Panc1 (cell line): ENCODE measurements at regions of chr2 and their contacts with region 1.

Region 1: DNA sequence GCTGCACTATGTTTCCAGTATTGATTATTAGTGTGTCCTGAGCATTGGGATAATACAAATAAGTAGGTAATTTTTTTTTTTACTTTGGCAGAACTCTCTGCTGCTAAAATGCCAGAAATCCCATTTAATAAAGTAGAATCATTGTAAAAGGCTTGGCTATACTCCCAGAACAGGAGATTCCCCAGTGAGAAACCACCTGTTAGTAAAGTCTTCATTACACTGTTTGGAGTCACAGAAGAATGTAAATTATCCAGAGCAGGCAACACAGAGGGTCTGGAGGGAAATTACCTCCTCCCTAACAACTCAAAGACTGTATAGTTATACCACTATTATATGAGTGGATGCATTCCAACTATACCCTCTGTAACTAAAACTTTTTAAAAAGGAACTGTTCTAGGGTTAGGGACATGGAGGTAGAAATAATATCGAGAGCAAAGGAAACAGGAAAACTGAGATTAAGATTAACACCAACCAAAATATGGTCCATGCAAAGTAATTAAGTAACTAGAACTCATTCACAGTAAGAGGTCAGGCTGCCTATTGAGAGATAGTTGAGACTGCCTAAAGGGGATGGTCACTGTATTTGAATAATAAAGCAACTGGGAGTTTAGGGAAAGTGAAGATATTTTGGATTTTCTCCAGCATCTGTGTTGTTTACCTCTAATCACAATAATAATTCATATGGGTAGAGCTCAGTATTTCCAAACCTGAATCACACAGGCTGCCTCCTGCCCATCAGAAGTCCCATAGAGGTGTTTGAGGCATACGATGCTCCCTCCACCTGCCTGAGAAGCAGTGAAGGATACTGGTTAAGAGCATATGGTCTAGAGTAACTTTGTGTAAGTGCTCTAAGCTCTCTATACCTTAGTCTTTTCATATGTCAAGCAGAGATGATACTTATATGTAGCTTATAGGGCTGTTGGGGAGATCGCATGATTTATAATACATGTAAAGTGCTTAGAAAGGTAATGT is 34.4 kb downstream of the MAP2 start:
- DNase-seq: no peak
- ATAC-seq: no peak
- H3K4me3 ChIP-seq: no peak overlapping the region
- H3K27ac ChIP-seq: no peak overlapping the region
- H3K4me1 ChIP-seq: no peaks in the 10 kb centered on the region; the same call in 1 of the 2 replicates
- H3K27me3 ChIP-seq: no peaks in the 10 kb centered on the region
- CTCF ChIP-seq: no peak

Region 2: DNA sequence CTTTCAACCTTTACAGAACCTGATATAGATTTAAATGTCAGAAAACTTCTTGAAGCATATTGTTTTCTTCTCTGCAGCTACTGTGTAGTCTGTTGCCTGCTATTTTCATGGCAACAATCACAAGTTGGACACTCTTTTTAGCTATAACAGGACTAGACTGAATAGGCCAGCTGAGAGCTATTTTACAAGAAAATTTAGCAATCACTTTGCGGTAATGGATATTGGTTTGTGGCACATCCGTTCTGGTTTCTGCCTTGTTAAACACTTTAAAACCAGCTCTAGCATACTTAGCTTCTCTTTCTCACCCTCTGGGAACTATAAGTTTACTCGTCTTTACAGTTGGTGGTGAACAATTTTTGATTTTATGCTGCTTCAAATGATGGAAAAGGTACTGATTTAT is 91.3 kb after region 1 on chr2:
- CTCF ChIA-PET with region 1: no interaction called
- POLR2A ChIA-PET with region 1: no interaction called
- in situ Hi-C with region 1: no loop called
- intact Hi-C with region 1: no loop called
- DNase-seq: no peak
- ATAC-seq: no peak
- H3K4me3 ChIP-seq: no peak overlapping the region
- H3K27ac ChIP-seq: no peak overlapping the region
- H3K4me1 ChIP-seq: no peaks in the 10 kb centered on the region
- H3K27me3 ChIP-seq: no peaks in the 10 kb centered on the region
- CTCF ChIP-seq: no peak

Region 3: DNA sequence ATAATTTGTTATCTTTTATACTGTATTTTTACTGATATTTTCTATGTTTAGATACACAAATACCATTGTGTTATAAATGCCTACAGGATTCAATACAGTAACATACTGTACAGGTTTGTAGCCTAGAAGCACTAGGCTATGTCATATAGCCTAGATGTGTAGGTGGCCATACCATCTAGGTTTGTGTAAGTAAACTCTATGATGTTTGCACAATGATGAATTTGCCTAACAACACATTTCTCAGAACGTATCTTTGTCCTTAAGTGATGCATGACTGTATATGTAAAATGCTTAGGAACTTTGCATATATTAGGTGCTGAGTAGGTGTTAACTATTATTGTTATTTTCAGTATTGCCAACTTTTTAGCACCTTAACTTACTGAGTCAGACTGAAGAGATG is 330.6 kb after region 1 on chr2:
- CTCF ChIA-PET with region 1: no interaction called
- POLR2A ChIA-PET with region 1: interaction called, 16 read pairs
- in situ Hi-C with region 1: no loop called
- intact Hi-C with region 1: no loop called
- DNase-seq: no peak
- ATAC-seq: no peak
- H3K4me3 ChIP-seq: no peak overlapping the region
- H3K27ac ChIP-seq: no peak overlapping the region
- H3K4me1 ChIP-seq: no peaks in the 10 kb centered on the region
- H3K27me3 ChIP-seq: no peaks in the 10 kb centered on the region
- CTCF ChIP-seq: no peak